HCT116 (cell line): ENCODE measurements at regions of chr22 and their contacts with region 1.

Region 1: GRCh38 chr22:37457093-37457893 is 28.9 kb downstream of the MFNG start:
- DNase-seq: peak; percentile 79
- ATAC-seq: peak; percentile 87
- H3K4me3 ChIP-seq: no peak overlapping the region
- H3K27ac ChIP-seq: peak overlapping the region; percentile 96
- H3K4me1 ChIP-seq: peaks cover 49 to 59% of the 10 kb centered on the region in 2 experiments
- H3K27me3 ChIP-seq: no peaks in the 10 kb centered on the region; the same call in 1 of the 2 replicates
- CTCF ChIP-seq: peak; percentile 97 to 99 (median 98)
- POLR2A ChIP-seq: no peak
- RAD21 ChIP-seq: peak; percentile 100

Region 2: DNA sequence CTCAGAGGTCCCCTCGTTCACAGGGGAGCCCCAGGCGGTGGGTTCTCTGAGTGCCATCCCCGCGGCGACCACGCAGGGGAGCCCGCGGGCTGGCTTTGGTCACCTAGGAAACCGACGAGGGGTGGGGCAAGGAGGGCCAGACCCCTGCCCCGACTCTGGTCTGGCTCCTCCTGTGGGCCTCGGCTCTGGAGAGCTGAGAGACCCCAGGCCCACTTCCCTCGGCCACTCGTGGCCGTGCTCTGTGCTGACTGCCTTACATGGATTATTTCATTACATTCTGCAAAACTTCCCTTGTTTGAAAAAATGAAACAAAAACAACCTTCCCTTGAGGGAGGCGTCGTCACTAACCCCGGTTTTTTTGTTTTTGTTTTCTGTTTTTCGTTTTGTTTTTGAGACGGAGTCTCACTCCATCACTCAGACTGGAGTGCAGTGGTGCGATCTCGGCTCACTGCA is 190.1 kb before region 1 on chr22:
- CTCF ChIA-PET with region 1: interaction called, 3 read pairs
- POLR2A ChIA-PET with region 1: no interaction called
- RAD21 ChIA-PET with region 1: no interaction called
- intact Hi-C with region 1: loop called (anchors 2 kb)
- DNase-seq: no peak
- ATAC-seq: peak; percentile 88
- H3K4me3 ChIP-seq: peak overlapping the region; percentile 32 to 51
- H3K27ac ChIP-seq: no peak overlapping the region; the same call in 1 of the 2 replicates
- H3K4me1 ChIP-seq: peaks cover 8 to 30% of the 10 kb centered on the region in 2 experiments
- H3K27me3 ChIP-seq: no peaks in the 10 kb centered on the region
- CTCF ChIP-seq: peak; percentile 60 to 90 (median 76); a peak in 5 of 6 replicates
- POLR2A ChIP-seq: no peak
- RAD21 ChIP-seq: peak; percentile 78

Region 3: DNA sequence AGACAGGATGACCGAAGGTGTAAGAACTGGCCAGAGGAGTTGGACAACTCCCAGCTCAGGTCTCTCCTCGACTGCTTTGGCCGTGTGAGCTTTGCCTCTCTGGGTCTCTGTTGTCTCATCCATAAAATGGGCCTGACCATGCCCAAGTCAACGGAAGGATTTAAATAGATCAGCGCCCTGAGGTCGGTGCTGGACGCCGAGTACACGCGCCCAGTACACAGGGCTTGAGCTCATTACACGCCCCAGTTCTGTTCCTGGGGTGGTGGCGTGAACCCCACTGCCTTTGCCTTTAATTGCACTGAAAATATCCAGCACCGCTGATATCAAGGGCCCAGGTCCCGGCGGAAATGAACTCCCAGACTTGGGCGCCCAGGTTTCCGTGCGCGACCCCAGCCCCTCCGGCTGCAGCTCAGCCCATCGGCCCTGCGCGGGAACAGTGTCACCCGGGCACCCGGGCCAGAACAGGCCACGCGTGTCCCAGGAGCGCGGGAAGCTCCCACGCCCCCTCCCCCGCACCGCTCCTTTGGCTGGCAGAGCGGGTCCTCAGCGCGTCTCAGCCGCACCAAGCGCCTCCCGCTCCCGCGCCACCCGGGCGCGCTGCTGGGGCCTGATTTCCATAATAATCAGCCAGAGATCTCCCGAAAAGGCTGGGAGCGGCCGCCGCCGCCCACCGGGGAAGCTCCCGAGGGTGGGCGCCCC is 132.8 kb before region 1 on chr22:
- CTCF ChIA-PET with region 1: interaction called, 18 read pairs
- POLR2A ChIA-PET with region 1: interaction called, 9 read pairs
- RAD21 ChIA-PET with region 1: interaction called in 1 of 2 experiments, 3 read pairs
- intact Hi-C with region 1: loop called (anchors 2 kb)
- DNase-seq: no peak
- ATAC-seq: no peak
- H3K4me3 ChIP-seq: 0 out of 4 replicates have a peak overlapping the region, but pooled peaks of 1 of the 2 experiments have one; percentile 15
- H3K27ac ChIP-seq: peak overlapping the region; percentile 100
- H3K4me1 ChIP-seq: peaks cover 92 to 100% of the 10 kb centered on the region in 2 experiments
- H3K27me3 ChIP-seq: no peaks in the 10 kb centered on the region
- CTCF ChIP-seq: no peak
- POLR2A ChIP-seq: no peak
- RAD21 ChIP-seq: no peak

Region 4: DNA sequence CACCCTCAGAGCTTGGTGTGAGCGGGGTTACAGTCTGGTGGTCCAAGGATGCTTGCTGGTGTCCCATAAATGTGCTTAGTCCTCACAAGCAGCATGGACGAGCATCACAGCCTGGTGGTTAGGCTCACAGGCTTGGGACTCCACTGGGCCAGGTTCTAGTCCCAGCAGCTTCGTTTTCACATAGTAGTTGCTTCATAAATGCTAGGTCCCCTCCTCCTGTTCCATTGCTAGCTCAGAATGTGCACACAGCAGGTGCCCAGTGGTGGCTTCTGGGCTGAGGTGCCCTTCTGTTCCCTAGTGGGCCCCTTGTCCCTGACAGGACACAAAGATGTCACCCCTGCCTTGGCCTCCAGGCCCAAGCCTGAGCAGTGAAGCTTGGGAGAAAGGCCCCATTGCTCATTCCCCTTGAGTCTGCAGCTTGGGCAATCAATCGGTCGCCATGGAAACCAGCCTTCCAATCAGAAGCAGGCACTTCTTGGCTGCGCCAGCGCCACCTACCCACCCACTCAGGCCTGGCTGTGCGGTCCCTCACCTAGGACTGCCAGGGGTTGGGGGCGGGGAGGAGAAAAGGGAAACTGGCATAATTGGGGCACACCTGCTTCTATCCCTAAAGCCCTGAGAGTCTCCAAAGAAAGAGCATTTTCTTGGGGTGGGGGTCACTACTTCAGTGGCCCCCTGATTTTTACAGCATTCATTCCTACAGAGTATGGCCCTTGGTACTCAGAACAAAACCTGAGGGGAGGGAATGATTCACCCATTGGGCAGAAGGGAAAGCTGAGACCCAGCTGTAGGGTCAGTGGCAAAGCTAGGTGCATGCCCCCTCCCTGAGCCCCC is 126.9 kb before region 1 on chr22:
- CTCF ChIA-PET with region 1: interaction called, 18 read pairs
- POLR2A ChIA-PET with region 1: interaction called, 9 read pairs
- RAD21 ChIA-PET with region 1: interaction called in 1 of 2 experiments, 3 read pairs
- intact Hi-C with region 1: loop called (anchors 2 kb)
- DNase-seq: peak; percentile 96
- ATAC-seq: peak; percentile 60
- H3K4me3 ChIP-seq: peak overlapping the region; percentile 17 to 29
- H3K27ac ChIP-seq: peak overlapping the region; percentile 100
- H3K4me1 ChIP-seq: peaks cover 81 to 96% of the 10 kb centered on the region in 2 experiments
- H3K27me3 ChIP-seq: no peaks in the 10 kb centered on the region
- CTCF ChIP-seq: peak in 2 of 3 experiments; percentile 55 to 62; a peak in 4 of 6 replicates
- POLR2A ChIP-seq: no peak
- RAD21 ChIP-seq: no peak

Region 5: GRCh38 chr22:37428649-37429586 is 28.4 kb before region 1 on chr22:
- CTCF ChIA-PET with region 1: no interaction called
- POLR2A ChIA-PET with region 1: interaction called, 3 read pairs
- RAD21 ChIA-PET with region 1: interaction called, 3 to 4 read pairs
- intact Hi-C with region 1: loop called (anchors 1 kb)
- DNase-seq: peak; percentile 37
- ATAC-seq: peak; percentile 31
- H3K4me3 ChIP-seq: peak overlapping the region; percentile 70 to 87; a peak in 3 of 4 replicates
- H3K27ac ChIP-seq: peak overlapping the region; percentile 95
- H3K4me1 ChIP-seq: peaks cover 54 to 91% of the 10 kb centered on the region in 2 experiments
- H3K27me3 ChIP-seq: no peaks in the 10 kb centered on the region
- CTCF ChIP-seq: peak in 2 of 3 experiments; percentile 82 to 88; a peak in 4 of 6 replicates
- POLR2A ChIP-seq: no peak
- RAD21 ChIP-seq: no peak

Region 6: GRCh38 chr22:37472418-37473006 is 15.2 kb after region 1 on chr22:
- CTCF ChIA-PET with region 1: interaction called, 12 read pairs
- POLR2A ChIA-PET with region 1: no interaction called
- RAD21 ChIA-PET with region 1: interaction called in 1 of 2 experiments, 3 read pairs
- intact Hi-C with region 1: no loop called
- DNase-seq: no peak
- ATAC-seq: peak; percentile 85
- H3K4me3 ChIP-seq: no peak overlapping the region
- H3K27ac ChIP-seq: no peak overlapping the region
- H3K4me1 ChIP-seq: peaks cover 6 to 37% of the 10 kb centered on the region in 2 experiments
- H3K27me3 ChIP-seq: no peaks in the 10 kb centered on the region
- CTCF ChIP-seq: peak; percentile 70 to 91 (median 90)
- POLR2A ChIP-seq: no peak
- RAD21 ChIP-seq: peak; percentile 78

Region 7: GRCh38 chr22:37486224-37486845 is 29.0 kb after region 1 on chr22 and contains the start of gene MFNG:
- CTCF ChIA-PET with region 1: no interaction called
- POLR2A ChIA-PET with region 1: no interaction called
- RAD21 ChIA-PET with region 1: no interaction called
- intact Hi-C with region 1: no loop called
- DNase-seq: no peak
- ATAC-seq: peak; percentile 93
- H3K4me3 ChIP-seq: peak within 1 kb of the TSS in 1 of 2 experiments; percentile 27; a peak in 1 of 4 replicates
- H3K27ac ChIP-seq: peak within 1 kb of the TSS; percentile 8; the same call in 1 of the 2 replicates
- H3K4me1 ChIP-seq: peaks cover 19 to 33% of the 10 kb centered on the region in 2 experiments
- H3K27me3 ChIP-seq: no peaks in the 10 kb centered on the region
- CTCF ChIP-seq: peak in 1 of 3 experiments; percentile 12; a peak in 1 of 6 replicates
- POLR2A ChIP-seq: no peak
- RAD21 ChIP-seq: no peak
- total RNA-seq, gene MFNG: 4.5 TPM